OCI-LY7 (cell line): ENCODE measurements at regions of chr17 and their contacts with region 1.

Region 1: DNA sequence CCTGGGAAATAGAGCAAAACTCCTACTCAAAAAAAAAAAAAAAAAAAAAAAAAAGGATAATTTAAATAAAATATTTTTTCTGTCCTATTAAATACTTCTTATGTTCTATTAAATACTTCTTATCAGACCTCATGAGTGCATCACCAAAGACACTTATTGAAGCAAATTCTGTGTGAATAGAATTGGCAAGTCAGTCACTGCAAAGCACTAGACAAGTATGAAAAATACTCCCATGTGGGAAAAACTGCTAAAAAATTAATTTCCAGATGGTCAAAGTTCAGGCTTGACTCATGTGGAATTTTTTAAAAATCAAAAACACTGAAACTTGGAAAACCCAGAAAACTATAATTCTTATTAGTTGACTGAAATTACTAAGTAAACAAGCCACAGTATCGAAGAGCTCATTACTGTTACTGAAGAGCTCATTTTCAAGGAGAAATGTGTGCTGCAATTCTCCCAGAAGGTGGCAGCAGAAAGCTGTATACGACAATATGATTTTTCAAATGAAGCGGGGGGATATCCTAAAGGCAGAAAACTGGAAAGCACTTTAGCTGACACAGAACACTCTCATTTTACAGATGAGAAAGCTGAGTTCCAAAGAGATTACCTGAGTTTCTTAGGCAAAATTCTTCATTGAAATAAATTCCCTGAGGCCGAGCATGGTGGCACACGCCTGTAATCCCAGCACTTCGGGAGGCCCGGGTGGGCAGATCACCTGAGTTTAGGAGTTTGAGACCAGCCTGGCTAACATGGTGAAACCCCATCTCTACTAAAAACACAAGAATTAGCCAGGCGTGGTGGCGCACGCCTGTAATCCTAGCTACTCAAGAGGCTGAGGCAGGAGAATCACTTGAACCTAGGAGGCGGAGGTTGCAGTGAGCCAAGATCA is 15.9 kb upstream of the FBXO47 start:
- DNase-seq: peak; percentile 82
- H3K4me3 ChIP-seq: no peak overlapping the region
- H3K27ac ChIP-seq: no peak overlapping the region
- H3K4me1 ChIP-seq: peaks cover 4% of the 10 kb centered on the region
- CTCF ChIP-seq: peak; percentile 96

Region 2: GRCh38 chr17:38898812-38899348 is 84.2 kb before region 1 on chr17:
- CTCF ChIA-PET with region 1: no interaction called
- POLR2A ChIA-PET with region 1: no interaction called
- intact Hi-C with region 1: no loop called
- DNase-seq: peak; percentile 88
- H3K4me3 ChIP-seq: peak overlapping the region; percentile 41
- H3K27ac ChIP-seq: peak overlapping the region; percentile 83
- H3K4me1 ChIP-seq: peaks cover 33% of the 10 kb centered on the region
- CTCF ChIP-seq: no peak

Region 3: DNA sequence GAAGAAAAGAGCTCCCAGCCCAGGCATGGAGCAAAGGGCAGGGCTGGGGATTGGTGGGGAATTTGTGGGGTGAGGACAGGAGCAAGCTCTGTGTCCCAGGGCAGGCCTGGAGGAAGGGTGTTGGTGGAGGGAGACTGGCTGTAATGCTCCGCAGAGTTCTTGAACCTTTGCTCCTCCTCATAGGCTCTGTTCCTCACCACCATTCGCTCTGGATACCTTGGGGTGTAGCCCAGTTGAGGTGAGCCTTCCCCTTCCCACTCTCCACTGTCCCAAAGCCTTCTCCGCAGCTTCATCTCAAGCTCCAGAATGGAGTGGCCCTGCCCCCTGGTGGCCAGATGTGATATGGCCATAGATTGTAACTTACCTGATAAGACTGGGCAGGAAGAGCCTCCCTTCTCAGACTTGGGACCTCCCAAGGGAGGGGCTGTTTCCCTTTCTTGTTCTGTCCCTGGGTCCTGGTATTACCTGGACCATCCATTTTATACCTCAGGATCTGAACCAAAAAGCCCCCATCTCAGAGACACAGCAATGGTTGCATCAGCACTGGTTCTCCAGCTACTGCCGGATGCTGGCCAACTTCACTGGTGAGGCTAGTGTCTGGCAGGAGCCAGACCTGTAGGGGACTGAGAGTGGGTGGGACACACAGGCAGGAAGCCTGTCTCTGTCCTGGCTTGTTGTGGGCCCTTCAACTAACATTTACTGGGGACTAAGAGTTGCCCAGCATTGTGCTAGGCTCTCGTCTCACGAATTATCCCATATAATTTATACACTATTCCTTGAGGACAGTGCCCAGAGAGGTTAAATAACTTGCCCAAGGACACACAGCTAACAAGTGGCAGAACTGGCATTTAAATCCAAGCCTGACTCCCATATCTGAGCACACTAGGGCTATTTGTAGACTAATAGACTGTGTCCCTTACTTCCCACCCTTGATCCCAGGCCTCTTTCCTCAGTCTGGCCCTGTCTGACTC is 261.8 kb after region 1 on chr17:
- CTCF ChIA-PET with region 1: interaction called, 4 read pairs
- POLR2A ChIA-PET with region 1: no interaction called
- intact Hi-C with region 1: loop called (anchors 1 kb)
- DNase-seq: peak; percentile 90
- H3K4me3 ChIP-seq: peak overlapping the region; percentile 23
- H3K27ac ChIP-seq: peak overlapping the region; percentile 59
- H3K4me1 ChIP-seq: peaks cover 53% of the 10 kb centered on the region
- CTCF ChIP-seq: peak; percentile 97